ENCODE measurements at regions of chr16 and their contacts with region 1.

Region 1: DNA sequence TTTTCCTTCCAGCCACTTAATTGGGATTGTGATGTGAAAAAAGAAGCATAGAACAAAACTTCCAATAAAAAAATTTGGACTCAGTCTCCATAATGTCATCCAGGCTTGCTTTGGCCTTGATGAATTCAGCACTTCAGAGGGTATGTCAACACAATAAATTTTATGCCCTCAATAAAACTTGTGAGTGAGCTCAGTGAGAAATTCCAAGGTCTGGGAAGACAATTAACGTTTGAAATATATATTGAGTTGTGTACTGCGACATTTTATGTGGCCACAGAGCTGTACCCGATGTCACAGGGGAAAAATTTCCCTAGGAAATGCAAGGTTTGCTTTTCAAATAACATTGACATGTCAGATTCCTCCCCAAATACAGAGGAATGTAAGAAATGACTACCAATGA is 496.6 kb downstream of the XYLT1 start:
- ATAC-seq: peak in 3 of 8 experiments; percentile 33 to 77 (median 69)
- H3K4me3 ChIP-seq: no peak overlapping the region
- H3K27ac ChIP-seq: no peak overlapping the region
- H3K4me1 ChIP-seq: peaks cover 11 to 15% of the 10 kb centered on the region in 2 donors

Region 2: DNA sequence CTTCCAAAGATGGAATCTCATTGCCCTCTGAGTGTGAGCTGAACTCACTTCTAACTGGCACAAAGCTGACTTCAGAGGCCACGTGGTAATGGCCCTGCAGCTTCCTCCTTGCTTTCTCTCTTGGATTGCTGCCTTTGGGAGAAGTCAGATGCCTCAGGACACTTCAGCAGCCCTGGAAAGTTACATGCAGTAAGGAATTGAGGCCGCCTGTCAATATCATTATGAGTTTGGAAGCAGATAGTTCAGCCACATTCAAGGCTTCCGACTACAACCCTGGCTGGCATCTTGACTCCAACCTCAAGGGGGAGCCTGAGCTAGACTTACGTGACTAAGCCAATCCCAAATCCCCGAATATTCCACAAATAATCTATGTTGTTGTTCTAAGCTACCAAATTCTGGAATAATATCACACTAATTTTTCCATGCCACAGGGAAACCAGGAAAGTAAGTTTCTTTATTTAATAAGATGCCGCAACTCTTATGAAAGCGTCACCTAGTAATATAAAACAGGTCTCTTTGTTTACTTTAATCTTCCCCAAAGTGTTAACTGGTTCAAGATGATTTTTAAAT is 1099.4 kb before region 1 on chr16:
- in situ Hi-C with region 1: no loop called
- ATAC-seq: peak in 5 of 8 experiments; percentile 52 to 94 (median 81)
- H3K4me3 ChIP-seq: no peak overlapping the region
- H3K27ac ChIP-seq: no peak overlapping the region
- H3K4me1 ChIP-seq: no peaks in the 10 kb centered on the region

Region 3: DNA sequence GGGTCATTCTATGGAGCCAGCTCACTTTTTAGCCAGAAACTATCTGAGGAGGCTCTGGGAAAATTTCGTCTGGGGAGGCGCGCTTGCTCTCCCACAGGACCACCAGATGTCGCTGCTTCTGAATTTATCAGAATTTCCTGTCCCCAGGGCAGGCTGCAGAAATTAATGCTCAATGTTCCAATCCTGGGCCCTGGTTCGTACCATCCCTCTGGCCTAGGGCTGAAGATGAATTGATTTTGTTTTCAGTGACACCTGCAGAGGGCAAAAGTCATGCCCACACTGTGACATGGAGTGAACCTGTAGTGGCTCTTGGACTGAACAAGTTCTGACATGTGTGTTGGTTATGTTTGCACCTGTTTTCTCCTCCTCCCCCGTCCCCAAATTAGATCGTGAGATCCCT is 112.7 kb before region 1 on chr16:
- in situ Hi-C with region 1: loop called in 1 of 9 experiments (anchors 25 kb)
- ATAC-seq: peak; percentile 48 to 82 (median 59)
- H3K4me3 ChIP-seq: no peak overlapping the region
- H3K27ac ChIP-seq: no peak overlapping the region
- H3K4me1 ChIP-seq: no peaks in the 10 kb centered on the region

Measured in motor neuron (in vitro differentiated cells).